ENCODE measurements at regions of chr1 and their contacts with region 1.

Region 1: GRCh38 chr1:165367375-165367993 is 11.0 kb upstream of the LMX1A start:
- DNase-seq: peak; percentile 79
- ATAC-seq: peak; percentile 72
- H3K4me3 ChIP-seq: no peak overlapping the region
- H3K27ac ChIP-seq: no peak overlapping the region
- H3K4me1 ChIP-seq: peaks cover 11 to 21% of the 10 kb centered on the region in 2 experiments; a peak in 3 of 4 replicates
- H3K27me3 ChIP-seq: no peaks in the 10 kb centered on the region
- CTCF ChIP-seq: peak; percentile 62 to 97 (median 95); a peak in 5 of 6 replicates
- POLR2A ChIP-seq: no peak
- RAD21 ChIP-seq: peak; percentile 53

Region 2: GRCh38 chr1:165114022-165114888 is 253.2 kb before region 1 on chr1:
- CTCF ChIA-PET with region 1: interaction called, 26 read pairs
- POLR2A ChIA-PET with region 1: no interaction called
- RAD21 ChIA-PET with region 1: no interaction called
- intact Hi-C with region 1: loop called (anchors 1 kb)
- DNase-seq: peak; percentile 44
- ATAC-seq: peak; percentile 74
- H3K4me3 ChIP-seq: no peak overlapping the region
- H3K27ac ChIP-seq: no peak overlapping the region
- H3K4me1 ChIP-seq: peaks cover 0 to 13% of the 10 kb centered on the region in 2 experiments; a peak in 2 of 4 replicates
- H3K27me3 ChIP-seq: peaks cover 16% of the 10 kb centered on the region
- CTCF ChIP-seq: peak; percentile 65 to 79 (median 67)
- POLR2A ChIP-seq: no peak
- RAD21 ChIP-seq: peak; percentile 82

Region 3: GRCh38 chr1:165129568-165130164 is 237.8 kb before region 1 on chr1:
- CTCF ChIA-PET with region 1: interaction called, 27 read pairs
- POLR2A ChIA-PET with region 1: interaction called, 3 read pairs
- RAD21 ChIA-PET with region 1: interaction called in 1 of 2 experiments, 4 read pairs
- intact Hi-C with region 1: loop called (anchors 5 kb)
- DNase-seq: peak; percentile 51
- ATAC-seq: peak; percentile 95
- H3K4me3 ChIP-seq: no peak overlapping the region
- H3K27ac ChIP-seq: no peak overlapping the region
- H3K4me1 ChIP-seq: no peaks in the 10 kb centered on the region
- H3K27me3 ChIP-seq: peaks cover 73% of the 10 kb centered on the region
- CTCF ChIP-seq: peak; percentile 54 to 79 (median 75); a peak in 5 of 6 replicates
- POLR2A ChIP-seq: no peak
- RAD21 ChIP-seq: peak; percentile 62

Region 4: DNA sequence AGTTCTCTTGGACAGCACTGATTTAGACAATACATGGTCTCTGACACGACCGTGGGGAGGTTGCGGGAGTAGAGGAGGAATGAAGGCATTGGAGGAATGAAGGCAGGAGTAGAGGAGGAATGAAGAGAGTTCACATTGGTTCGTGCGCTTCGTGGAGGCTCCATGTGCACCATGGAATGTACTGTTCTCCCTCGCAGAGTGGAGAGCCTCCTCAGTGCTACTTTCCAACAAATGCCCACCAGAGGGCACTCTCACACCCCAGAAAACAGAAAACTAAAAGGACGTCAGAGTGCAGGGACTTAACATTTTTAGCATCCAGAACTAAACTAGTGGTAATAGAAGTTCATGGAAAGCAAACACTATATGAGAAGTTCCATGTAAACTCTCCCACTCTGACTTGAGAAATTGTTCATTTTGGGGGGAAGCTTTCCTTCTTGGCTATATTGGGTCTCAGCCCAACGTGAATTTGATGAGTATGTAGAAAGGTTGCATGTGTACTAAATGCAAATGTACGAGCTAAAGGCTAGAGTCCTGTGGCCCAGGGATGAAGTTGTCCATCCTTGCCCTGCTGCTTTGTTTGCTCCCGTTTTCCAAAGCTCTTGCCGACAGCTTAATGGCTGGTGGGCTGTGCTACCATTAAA is 222.6 kb before region 1 on chr1:
- CTCF ChIA-PET with region 1: interaction called, 3 read pairs
- POLR2A ChIA-PET with region 1: no interaction called
- RAD21 ChIA-PET with region 1: no interaction called
- intact Hi-C with region 1: loop called (anchors 5 kb)
- DNase-seq: peak; percentile 47
- ATAC-seq: peak; percentile 95
- H3K4me3 ChIP-seq: no peak overlapping the region
- H3K27ac ChIP-seq: no peak overlapping the region
- H3K4me1 ChIP-seq: no peaks in the 10 kb centered on the region
- H3K27me3 ChIP-seq: peaks cover 5% of the 10 kb centered on the region; the same call in 1 of the 2 replicates
- CTCF ChIP-seq: peak; percentile 67 to 83 (median 80)
- POLR2A ChIP-seq: no peak
- RAD21 ChIP-seq: peak; percentile 67

Region 5: GRCh38 chr1:165257969-165258459 is 109.5 kb before region 1 on chr1:
- CTCF ChIA-PET with region 1: interaction called, 32 read pairs
- POLR2A ChIA-PET with region 1: no interaction called
- RAD21 ChIA-PET with region 1: interaction called in 1 of 2 experiments, 6 read pairs
- intact Hi-C with region 1: loop called (anchors 1 kb)
- DNase-seq: peak; percentile 65
- ATAC-seq: peak; percentile 95
- H3K4me3 ChIP-seq: no peak overlapping the region
- H3K27ac ChIP-seq: no peak overlapping the region
- H3K4me1 ChIP-seq: no peaks in the 10 kb centered on the region
- H3K27me3 ChIP-seq: peaks cover 38% of the 10 kb centered on the region
- CTCF ChIP-seq: peak; percentile 73 to 93 (median 82)
- POLR2A ChIP-seq: no peak
- RAD21 ChIP-seq: peak; percentile 80

Region 6: GRCh38 chr1:165383599-165384405 is 16.3 kb after region 1 on chr1:
- CTCF ChIA-PET with region 1: interaction called, 10 read pairs
- POLR2A ChIA-PET with region 1: no interaction called
- RAD21 ChIA-PET with region 1: no interaction called
- intact Hi-C with region 1: no loop called
- DNase-seq: no peak
- ATAC-seq: no peak
- H3K4me3 ChIP-seq: no peak overlapping the region
- H3K27ac ChIP-seq: no peak overlapping the region
- H3K4me1 ChIP-seq: peaks cover 0 to 7% of the 10 kb centered on the region in 2 experiments; a peak in 2 of 4 replicates
- H3K27me3 ChIP-seq: peaks cover 29% of the 10 kb centered on the region
- CTCF ChIP-seq: no peak
- POLR2A ChIP-seq: no peak
- RAD21 ChIP-seq: no peak

Region 7: GRCh38 chr1:165392634-165393571 is 25.4 kb after region 1 on chr1:
- CTCF ChIA-PET with region 1: interaction called, 13 read pairs
- POLR2A ChIA-PET with region 1: no interaction called
- RAD21 ChIA-PET with region 1: no interaction called
- intact Hi-C with region 1: no loop called
- DNase-seq: peak; percentile 55
- ATAC-seq: peak; percentile 99
- H3K4me3 ChIP-seq: no peak overlapping the region
- H3K27ac ChIP-seq: no peak overlapping the region
- H3K4me1 ChIP-seq: peaks cover 4 to 7% of the 10 kb centered on the region in 2 experiments; a peak in 2 of 4 replicates
- H3K27me3 ChIP-seq: peaks cover 38% of the 10 kb centered on the region
- CTCF ChIP-seq: peak; percentile 63 to 94 (median 91)
- POLR2A ChIP-seq: no peak
- RAD21 ChIP-seq: peak; percentile 86

Region 8: DNA sequence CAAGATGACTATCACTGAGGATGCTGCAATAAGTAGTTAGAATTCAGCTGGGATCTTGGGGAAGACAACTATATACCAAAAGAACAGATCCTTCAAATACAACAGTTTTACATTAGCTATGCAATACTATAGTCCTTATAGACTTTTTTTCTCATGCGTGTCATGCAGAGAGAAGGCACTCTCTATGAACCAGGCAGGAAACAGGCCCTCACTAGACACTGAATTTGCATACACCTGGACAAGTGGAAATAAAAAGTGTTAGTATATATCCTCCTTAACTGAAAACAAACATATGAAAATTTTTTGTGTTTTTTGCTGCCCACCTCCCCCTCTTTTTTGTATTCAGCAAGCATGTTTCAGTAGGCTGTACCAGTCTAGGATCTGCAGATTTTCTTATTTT is 371.3 kb after region 1 on chr1:
- CTCF ChIA-PET with region 1: no interaction called
- POLR2A ChIA-PET with region 1: no interaction called
- RAD21 ChIA-PET with region 1: no interaction called
- intact Hi-C with region 1: no loop called
- DNase-seq: no peak
- ATAC-seq: no peak
- H3K4me3 ChIP-seq: no peak overlapping the region
- H3K27ac ChIP-seq: no peak overlapping the region
- H3K4me1 ChIP-seq: no peaks in the 10 kb centered on the region
- H3K27me3 ChIP-seq: no peaks in the 10 kb centered on the region
- CTCF ChIP-seq: no peak
- POLR2A ChIP-seq: no peak
- RAD21 ChIP-seq: no peak

Measured in HCT116 (cell line).